Dorsolateral prefrontal cortex (tissue), 120 donors: ENCODE measurements at regions of chr4 and their contacts with region 1.

Region 1: DNA sequence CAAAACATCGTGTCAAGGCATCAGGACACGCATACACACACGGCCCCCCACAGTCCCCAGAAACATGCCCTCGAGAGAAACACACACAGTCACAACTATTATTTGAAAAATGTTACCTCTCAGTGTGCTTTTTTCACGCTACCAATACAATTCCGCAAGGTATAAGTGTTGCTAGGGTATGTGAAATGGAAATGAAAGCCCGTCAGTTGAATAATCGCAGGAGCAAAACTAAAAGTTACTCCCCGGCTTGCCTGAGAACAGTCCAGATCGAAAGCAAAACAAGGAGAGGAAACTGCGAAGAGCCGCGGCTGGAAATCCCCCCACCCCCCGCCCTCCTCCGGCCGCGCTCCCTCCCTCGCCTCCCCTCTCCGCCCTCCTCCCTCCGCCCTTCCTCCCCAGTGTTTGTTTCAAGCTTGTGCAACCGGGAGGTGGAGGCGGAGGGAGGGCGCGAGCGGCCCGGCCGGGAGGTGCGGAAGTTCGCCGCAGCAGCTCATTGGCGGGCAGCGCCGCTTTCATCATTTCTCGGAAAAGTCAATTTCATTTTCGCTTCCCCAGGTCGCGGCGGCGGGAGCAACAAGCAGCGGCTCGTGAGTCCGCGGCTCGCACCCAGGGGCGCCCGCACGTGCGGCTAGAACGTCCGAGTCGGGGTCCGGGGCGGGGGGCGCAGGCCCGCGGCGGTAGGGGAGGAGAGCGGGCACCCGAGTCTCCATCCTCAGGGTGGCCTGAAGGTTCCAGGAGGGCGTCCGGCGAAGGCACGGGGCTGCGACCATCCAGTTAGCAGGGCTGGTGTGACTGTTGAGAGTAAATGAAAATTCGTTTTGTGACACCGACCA is at the start of gene IRF2:
- DNase-seq: peak; percentile 90 to 96 (median 94)
- H3K4me3 ChIP-seq: peak within 1 kb of the TSS; percentile 62 to 99 (median 89)
- H3K27ac ChIP-seq: peak within 1 kb of the TSS; percentile 77 to 100 (median 98)
- H3K27me3 ChIP-seq: no peaks in the 10 kb centered on the region
- CTCF ChIP-seq: peak in 37 of 56 donors; percentile 8 to 58 (median 27)
- total RNA-seq, gene IRF2: 18.8 to 61.7 (median 33.1) TPM

Region 2: GRCh38 chr4:184282251-184282713 is 192.2 kb before region 1 on chr4:
- intact Hi-C with region 1: loop called (anchors 5 kb)
- DNase-seq: no peak
- H3K4me3 ChIP-seq: no peak overlapping the region
- H3K27ac ChIP-seq: peak overlapping the region in 52 of 59 donors; percentile 6 to 94 (median 85)
- H3K27me3 ChIP-seq: no peaks in the 10 kb centered on the region
- CTCF ChIP-seq: peak in 1 of 56 donors; percentile 5

Region 3: DNA sequence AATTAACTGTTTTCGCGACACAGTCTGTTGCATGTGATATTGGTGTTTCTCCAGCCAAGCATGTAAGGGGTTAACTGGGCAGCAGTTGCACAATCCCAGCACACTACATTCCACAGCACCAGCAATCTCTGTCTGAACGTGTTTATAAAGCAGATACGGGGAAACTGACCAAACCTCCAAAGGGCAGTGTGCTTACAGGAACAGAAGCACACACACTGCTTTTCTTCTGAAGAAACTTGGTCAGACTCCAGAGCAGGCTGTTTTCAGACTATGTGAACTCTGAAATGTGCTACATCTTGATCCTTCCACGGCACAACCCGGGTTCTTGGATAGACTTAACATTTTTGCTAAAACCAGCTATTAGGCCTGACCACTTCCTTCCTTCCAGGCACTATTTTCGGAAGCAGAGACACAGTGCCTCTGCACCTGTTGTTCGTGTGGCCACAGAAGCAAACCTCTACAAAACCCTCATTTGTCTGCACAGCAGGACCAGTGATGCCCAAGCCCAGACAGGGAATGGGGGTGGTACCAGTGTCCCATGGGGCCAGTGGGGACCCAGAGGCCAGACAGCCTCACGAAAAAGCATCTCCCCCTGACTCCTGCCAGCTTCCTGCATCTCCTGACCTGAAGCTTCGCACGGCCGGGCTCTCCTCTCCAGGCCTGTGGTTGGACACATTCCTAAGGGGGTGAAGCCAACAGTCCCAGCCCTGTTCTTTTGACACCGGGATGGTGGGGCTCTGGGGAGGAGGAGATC is 90.2 kb before region 1 on chr4:
- intact Hi-C with region 1: loop called in 1 of 2 experiments (anchors 5 kb)
- DNase-seq: peak in 1 of 10 donors; percentile 19
- H3K4me3 ChIP-seq: peak overlapping the region in 40 of 59 donors; percentile 2 to 52 (median 22)
- H3K27ac ChIP-seq: peak overlapping the region in 58 of 59 donors; percentile 3 to 87 (median 66)
- H3K27me3 ChIP-seq: no peaks in the 10 kb centered on the region
- CTCF ChIP-seq: no peak

Region 4: GRCh38 chr4:184514121-184514988 is 39.9 kb after region 1 on chr4:
- intact Hi-C with region 1: loop called in 1 of 2 experiments (anchors 5 kb)
- DNase-seq: peak in 9 of 10 donors; percentile 38 to 91 (median 75)
- H3K4me3 ChIP-seq: peak overlapping the region in 26 of 59 donors; percentile 1 to 40 (median 16)
- H3K27ac ChIP-seq: peak overlapping the region; percentile 56 to 97 (median 90)
- H3K27me3 ChIP-seq: no peaks in the 10 kb centered on the region
- CTCF ChIP-seq: peak in 1 of 56 donors; percentile 10

Region 5: DNA sequence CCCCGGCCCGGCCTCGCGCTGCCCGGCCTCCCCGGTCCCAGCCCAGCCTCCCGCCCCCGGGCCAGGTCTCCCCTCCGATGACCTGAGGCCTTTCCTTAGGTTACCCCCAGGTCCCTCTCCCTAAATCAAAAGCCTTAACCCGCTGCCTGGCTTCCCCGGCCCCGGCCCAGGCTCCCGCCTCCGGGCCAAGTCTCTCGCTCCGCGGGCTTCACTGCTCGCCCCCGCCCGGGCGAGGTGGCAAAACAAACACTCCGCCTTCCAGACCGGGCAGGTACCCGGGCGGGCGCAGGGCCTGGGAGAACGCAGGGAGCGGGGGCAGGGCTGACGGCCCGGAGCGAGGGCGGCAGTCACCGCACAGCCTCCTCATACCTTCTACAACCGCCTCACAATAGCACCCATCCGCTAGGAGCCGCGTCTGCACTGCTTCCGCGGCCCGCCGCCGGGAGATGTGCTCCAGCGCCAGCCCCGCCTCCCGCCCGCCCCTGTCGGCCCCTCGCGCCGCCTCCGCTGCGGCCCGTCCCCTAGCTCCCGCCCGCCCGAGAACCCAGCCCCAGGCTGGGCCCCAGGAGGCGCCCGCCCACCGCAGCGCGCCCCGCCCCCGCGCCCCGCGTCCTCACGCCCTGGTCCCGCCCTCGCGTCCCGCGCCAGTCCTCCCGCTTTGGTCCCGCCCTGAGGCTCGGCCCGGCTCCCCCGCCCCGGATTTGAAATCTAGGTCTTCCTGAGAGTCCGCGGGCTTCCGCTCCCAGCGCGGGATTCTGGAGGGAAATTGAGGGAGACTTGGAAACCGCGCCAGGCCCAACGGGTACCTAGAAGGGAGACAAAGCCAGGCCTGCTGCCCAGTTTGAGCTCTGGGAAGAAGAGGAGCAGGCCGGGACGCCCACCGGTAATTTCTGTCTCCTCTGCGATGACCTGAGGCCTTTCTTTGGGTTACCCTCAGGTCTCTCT is 174.8 kb after region 1 on chr4 and contains the starts of genes CASP3 and PRIMPOL:
- intact Hi-C with region 1: loop called (anchors 1 to 2 kb)
- DNase-seq: peak; percentile 93 to 99 (median 96)
- H3K4me3 ChIP-seq: peak within 1 kb of the TSS; percentile 60 to 97 (median 89)
- H3K27ac ChIP-seq: peak within 1 kb of the TSS; percentile 55 to 98 (median 94)
- H3K27me3 ChIP-seq: no peaks in the 10 kb centered on the region
- CTCF ChIP-seq: peak in 51 of 56 donors; percentile 14 to 67 (median 44)
- total RNA-seq, gene CASP3: 6.4 to 17.2 (median 12.2) TPM
- total RNA-seq, gene PRIMPOL: 9.5 to 30.5 (median 17.5) TPM